Right cardiac atrium (tissue), 5 donors: ENCODE measurements at regions of chr16 and their contacts with region 1.

Region 1: DNA sequence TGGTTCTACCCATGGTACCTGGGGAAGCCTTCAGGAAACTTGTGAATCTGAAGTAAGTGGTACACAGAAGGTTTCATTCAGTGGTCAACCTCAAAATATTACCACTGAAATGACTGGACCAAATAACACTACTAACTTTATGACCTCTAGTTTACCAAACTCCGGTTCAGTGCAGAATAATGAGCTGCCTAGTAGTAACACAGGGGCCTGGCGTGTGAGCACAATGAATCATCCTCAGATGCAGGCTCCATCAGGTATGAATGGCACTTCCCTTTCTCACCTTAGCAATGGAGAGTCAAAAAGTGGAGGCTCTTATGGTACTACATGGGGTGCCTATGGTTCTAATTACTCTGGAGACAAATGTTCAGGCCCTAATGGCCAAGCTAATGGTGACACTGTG is 55.9 kb upstream of the SLC5A11 start:
- DNase-seq: no peak
- ATAC-seq: no peak
- H3K4me3 ChIP-seq: no peak overlapping the region
- H3K27ac ChIP-seq: no peak overlapping the region
- H3K4me1 ChIP-seq: no peaks in the 10 kb centered on the region
- H3K27me3 ChIP-seq: no peaks in the 10 kb centered on the region

Region 2: GRCh38 chr16:24700549-24701392 is 89.1 kb before region 1 on chr16:
- intact Hi-C with region 1: no loop called
- DNase-seq: peak; percentile 78 to 82 (median 80)
- ATAC-seq: peak; percentile 97
- H3K4me3 ChIP-seq: no peak overlapping the region
- H3K27ac ChIP-seq: peak overlapping the region; percentile 94
- H3K4me1 ChIP-seq: peaks cover 7% of the 10 kb centered on the region
- H3K27me3 ChIP-seq: no peaks in the 10 kb centered on the region

Region 3: GRCh38 chr16:24748242-24748641 is 41.6 kb before region 1 on chr16:
- intact Hi-C with region 1: no loop called
- DNase-seq: peak in 1 of 3 donors; percentile 49
- ATAC-seq: peak; percentile 91 to 93
- H3K4me3 ChIP-seq: no peak overlapping the region
- H3K27ac ChIP-seq: no peak overlapping the region
- H3K4me1 ChIP-seq: peaks cover 12% of the 10 kb centered on the region
- H3K27me3 ChIP-seq: no peaks in the 10 kb centered on the region

Region 4: GRCh38 chr16:24921229-24921628 is 131.3 kb after region 1 on chr16:
- intact Hi-C with region 1: no loop called
- DNase-seq: no peak
- ATAC-seq: no peak
- H3K4me3 ChIP-seq: no peak overlapping the region
- H3K27ac ChIP-seq: no peak overlapping the region
- H3K4me1 ChIP-seq: no peaks in the 10 kb centered on the region
- H3K27me3 ChIP-seq: no peaks in the 10 kb centered on the region

Region 5: GRCh38 chr16:24950275-24950674 is 160.4 kb after region 1 on chr16:
- intact Hi-C with region 1: loop called in 1 of 4 experiments (anchors 10 kb)
- DNase-seq: no peak
- ATAC-seq: no peak
- H3K4me3 ChIP-seq: no peak overlapping the region
- H3K27ac ChIP-seq: no peak overlapping the region
- H3K4me1 ChIP-seq: no peaks in the 10 kb centered on the region
- H3K27me3 ChIP-seq: no peaks in the 10 kb centered on the region

Region 6: DNA sequence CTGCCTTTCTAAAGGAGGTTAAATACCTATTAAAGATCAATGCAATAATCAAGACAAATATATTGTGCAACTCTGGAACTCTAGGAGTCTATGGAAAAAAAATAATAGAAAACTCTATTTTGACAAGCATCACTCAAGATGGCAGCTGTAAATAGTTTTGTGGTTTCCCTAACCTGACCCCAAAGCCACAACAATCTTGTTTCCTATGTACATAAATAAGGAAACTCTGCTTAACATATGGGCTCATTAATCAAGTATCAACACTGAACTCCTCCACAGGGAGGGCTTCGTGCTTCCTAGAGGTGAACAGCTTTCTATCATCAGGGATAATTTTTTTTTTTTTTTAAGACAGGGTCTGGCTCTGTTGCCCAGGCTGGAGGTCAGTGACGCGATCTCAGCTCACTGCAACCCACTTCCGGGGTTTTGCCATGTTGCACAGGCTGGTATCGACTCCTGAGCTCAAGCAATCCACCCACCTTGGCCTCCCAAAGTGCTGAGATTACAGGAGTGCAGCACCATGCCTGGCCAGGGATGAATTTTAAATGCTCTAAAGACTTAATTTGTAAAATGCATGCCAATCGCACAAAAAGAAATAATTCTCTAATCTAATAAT is 182.8 kb after region 1 on chr16:
- intact Hi-C with region 1: no loop called
- DNase-seq: no peak
- ATAC-seq: no peak
- H3K4me3 ChIP-seq: no peak overlapping the region
- H3K27ac ChIP-seq: no peak overlapping the region
- H3K4me1 ChIP-seq: peaks cover 20% of the 10 kb centered on the region
- H3K27me3 ChIP-seq: no peaks in the 10 kb centered on the region